Activated CD4-positive, alpha-beta T cell treated with anti-CD3 and anti-CD28 coated beads, Interleukin-2, amount 10 ng/mL, durations not matched to agents 24 days and 14 days (primary cell): ENCODE measurements at regions of chr5 and their contacts with region 1.

Region 1: DNA sequence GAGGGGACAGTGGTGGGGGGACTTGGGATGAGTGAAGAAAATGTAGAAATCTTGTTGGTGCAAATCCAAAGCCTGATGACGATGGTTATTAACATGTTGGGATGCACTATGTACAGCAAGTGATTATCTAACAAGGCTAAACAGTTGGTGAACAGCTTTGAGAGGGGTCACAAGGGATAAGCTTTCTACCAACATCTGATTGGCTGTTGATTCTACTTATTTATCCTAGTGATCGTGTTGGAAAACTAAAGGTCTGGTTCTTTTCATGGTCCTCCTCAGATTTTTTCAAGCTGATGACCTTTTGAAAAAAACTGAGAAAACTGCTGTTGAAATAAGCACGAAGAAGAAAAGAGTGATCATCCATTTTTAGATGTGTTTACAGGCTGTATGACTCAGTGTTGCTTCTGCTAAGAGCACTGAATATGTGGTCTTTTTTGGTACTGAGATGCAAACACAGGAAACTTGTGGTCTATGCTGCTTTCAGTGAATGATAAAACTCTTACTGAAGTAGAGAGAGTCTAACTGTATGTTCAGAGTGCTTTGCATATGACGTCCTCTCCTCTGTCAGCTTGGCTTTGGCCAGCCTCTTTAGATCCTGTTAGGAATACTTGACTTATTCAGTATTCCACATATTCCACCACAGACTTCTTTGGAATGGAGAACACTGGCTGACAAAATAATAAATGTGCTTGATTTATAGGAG is 174.8 kb downstream of the SLF1 start:
- DNase-seq: peak; percentile 84
- H3K4me3 Mint-ChIP-seq: peak overlapping the region; percentile 78
- H3K27ac Mint-ChIP-seq: peak overlapping the region; percentile 95
- H3K4me1 Mint-ChIP-seq: peaks cover 42% of the 10 kb centered on the region
- H3K27me3 Mint-ChIP-seq: peaks cover 9% of the 10 kb centered on the region

Region 2: DNA sequence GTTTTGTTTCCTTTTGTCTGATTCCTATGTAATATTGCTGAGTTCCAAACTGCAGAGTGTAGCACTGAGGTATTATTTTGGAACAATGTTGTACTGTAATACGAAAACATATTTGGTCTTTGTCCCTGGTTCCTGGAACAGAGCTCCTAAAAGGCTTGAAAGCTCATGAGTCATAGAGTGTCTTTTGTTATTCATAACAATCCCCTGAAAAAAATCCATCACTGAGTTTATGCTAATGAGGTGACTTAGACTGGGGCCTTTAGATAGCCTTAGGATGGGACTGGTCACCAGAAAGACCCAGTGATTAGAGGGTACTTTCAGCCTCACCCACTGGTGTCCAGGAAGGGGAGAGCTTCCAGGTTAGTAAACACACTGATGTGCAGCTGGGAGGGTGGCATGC is 919.2 kb before region 1 on chr5:
- intact Hi-C with region 1: loop called (anchors 10 kb)
- DNase-seq: no peak
- H3K4me3 Mint-ChIP-seq: peak overlapping the region; percentile 24
- H3K27ac Mint-ChIP-seq: peak overlapping the region; percentile 84
- H3K4me1 Mint-ChIP-seq: peaks cover 13% of the 10 kb centered on the region
- H3K27me3 Mint-ChIP-seq: no peaks in the 10 kb centered on the region

Region 3: GRCh38 chr5:94618493-94619328 is 174.6 kb before region 1 on chr5 and contains the starts of genes KIAA0825 and SLF1:
- intact Hi-C with region 1: loop called (anchors 1 kb)
- DNase-seq: peak; percentile 96
- H3K4me3 Mint-ChIP-seq: peak within 1 kb of the TSS; percentile 95
- H3K27ac Mint-ChIP-seq: peak within 1 kb of the TSS; percentile 91
- H3K4me1 Mint-ChIP-seq: peaks cover 32% of the 10 kb centered on the region
- H3K27me3 Mint-ChIP-seq: no peaks in the 10 kb centered on the region
- total RNA-seq, gene KIAA0825: 0.28 and 0.54 TPM in 2 replicates
- total RNA-seq, gene SLF1: 11.5 and 13.7 TPM in 2 replicates

Region 4: DNA sequence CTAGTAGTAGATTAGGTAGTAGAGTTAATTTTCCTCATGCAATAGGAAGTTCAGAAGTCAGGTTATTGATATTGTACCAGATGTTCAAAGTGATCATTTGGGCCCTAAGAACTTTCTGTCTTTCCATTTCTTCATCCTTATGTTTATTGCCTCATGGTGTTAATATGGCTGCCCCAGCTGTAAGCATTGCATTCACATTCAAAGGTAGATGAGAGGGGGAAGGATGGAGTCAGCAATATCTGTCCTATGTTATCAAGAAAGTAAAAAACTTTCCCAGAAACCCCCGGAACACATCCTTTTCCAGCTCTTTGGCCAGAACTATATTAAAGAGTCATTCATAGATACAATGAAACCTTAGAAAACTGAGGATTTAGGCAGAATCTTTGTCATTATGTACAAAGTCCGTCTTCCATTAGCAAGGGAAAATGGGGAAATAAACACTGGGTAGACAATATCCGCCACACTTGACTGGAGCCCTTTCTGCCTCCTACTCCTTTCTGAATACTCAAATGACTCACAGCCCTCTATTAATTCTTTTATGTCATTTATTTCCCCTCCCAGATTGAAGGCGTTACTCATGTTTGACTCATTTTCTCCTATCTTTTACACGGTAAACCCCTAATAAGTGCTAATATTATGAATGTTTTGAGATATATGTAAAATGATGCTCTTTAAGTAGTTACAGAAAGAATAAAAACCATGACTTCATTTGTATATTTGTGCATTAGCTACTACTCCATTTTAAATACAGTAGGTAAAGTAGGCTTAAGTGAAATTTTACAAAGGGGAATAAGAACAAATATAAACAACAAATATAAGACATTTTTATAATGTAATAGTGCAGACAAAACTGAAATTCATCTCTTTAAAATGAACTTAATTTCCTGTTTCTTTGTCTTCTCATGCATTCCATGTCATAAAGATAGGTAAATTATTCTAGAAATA is 47.2 kb before region 1 on chr5:
- intact Hi-C with region 1: loop called (anchors 5 kb)
- DNase-seq: no peak
- H3K4me3 Mint-ChIP-seq: no peak overlapping the region
- H3K27ac Mint-ChIP-seq: no peak overlapping the region
- H3K4me1 Mint-ChIP-seq: no peaks in the 10 kb centered on the region
- H3K27me3 Mint-ChIP-seq: no peaks in the 10 kb centered on the region

Region 5: DNA sequence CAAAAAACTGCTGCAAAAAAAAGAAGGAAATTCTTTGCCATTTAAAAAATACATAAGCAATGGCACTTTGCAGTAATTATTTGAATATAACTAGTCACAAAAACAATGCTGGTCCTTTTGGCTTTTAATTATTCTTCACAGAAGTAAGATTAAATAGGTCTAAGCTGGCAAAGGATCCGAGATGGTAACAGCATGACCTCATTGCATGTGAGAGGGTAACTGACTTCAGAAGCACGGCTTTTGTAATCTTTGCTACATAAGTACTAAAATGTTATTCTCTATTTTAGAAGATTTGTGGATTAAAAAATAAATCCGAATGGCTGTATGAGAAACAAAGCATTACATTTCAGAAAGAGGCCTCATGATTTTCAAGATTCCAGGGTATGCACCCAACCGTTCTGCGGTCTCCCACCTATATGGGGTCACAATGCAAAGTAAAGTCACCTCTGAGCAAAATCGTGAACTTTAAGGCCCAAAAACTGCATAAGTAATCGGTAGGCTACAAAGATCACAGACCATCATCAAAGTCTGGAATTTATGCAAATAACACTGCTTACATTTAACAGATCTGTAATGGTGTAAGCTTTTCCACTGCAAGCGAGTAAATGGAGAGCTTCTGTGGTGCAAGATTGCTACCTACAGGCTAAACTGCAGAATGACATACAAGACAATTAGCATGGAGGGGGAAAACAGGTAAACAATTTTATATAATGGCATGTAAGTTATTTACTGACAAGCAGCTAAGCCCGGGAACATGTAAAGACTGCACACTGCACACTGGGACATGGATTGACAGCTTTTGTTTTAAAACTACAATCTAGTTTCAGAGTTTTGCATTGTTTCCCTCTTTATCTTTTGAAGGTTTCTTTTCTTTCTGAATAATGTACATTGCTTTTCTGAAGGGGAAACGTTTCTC is 56.8 kb after region 1 on chr5:
- intact Hi-C with region 1: loop called (anchors 1 kb)
- DNase-seq: peak; percentile 81
- H3K4me3 Mint-ChIP-seq: no peak overlapping the region
- H3K27ac Mint-ChIP-seq: no peak overlapping the region
- H3K4me1 Mint-ChIP-seq: peaks cover 6% of the 10 kb centered on the region
- H3K27me3 Mint-ChIP-seq: peaks cover 11% of the 10 kb centered on the region

Region 6: GRCh38 chr5:94863951-94864350 is 70.7 kb after region 1 on chr5:
- intact Hi-C with region 1: no loop called
- DNase-seq: no peak
- H3K4me3 Mint-ChIP-seq: no peak overlapping the region
- H3K27ac Mint-ChIP-seq: no peak overlapping the region
- H3K4me1 Mint-ChIP-seq: no peaks in the 10 kb centered on the region
- H3K27me3 Mint-ChIP-seq: peaks cover 7% of the 10 kb centered on the region

Region 7: GRCh38 chr5:95949810-95950209 is 1156.5 kb after region 1 on chr5:
- intact Hi-C with region 1: no loop called
- DNase-seq: no peak
- H3K4me3 Mint-ChIP-seq: peak overlapping the region; percentile 37
- H3K27ac Mint-ChIP-seq: no peak overlapping the region
- H3K4me1 Mint-ChIP-seq: peaks cover 52% of the 10 kb centered on the region
- H3K27me3 Mint-ChIP-seq: no peaks in the 10 kb centered on the region